HepG2 (cell line): ENCODE measurements at regions of chr17 and their contacts with region 1.

Region 1: GRCh38 chr17:42819944-42820535 is 4.0 kb downstream of the BECN1 start:
- DNase-seq: peak; percentile 88
- ATAC-seq: peak; percentile 67
- H3K4me3 ChIP-seq: no peak overlapping the region
- H3K27ac ChIP-seq: no peak overlapping the region
- H3K4me1 ChIP-seq: peaks cover 35% of the 10 kb centered on the region
- H3K27me3 ChIP-seq: peaks cover 0 to 7% of the 10 kb centered on the region in 2 experiments; a peak in 1 of 5 replicates
- CTCF ChIP-seq: peak; percentile 81
- EP300 ChIP-seq: no peak
- POLR2A ChIP-seq: no peak
- RAD21 ChIP-seq: peak; percentile 60

Region 2: DNA sequence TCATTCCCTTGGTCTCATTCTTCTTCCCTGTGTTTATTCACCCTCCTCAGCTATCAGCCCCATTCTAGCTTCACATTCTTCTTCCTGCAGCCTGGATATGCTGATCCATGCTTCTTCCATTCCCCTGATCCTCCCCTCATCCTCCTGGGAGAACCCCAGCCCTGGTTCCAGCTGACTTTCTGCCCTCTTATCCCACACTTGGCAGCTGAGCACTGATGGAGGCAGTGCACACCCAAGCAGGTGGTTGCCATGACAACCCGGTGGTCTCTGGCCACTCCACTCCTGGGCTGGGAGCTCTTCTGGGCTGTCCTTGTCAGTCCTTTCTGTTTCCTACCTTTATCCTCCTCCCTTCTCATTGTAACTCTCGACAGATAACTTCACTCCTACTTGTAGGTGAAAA is 177.7 kb before region 1 on chr17:
- CTCF ChIA-PET with region 1: no interaction called
- POLR2A ChIA-PET with region 1: no interaction called
- in situ Hi-C with region 1: no loop called
- intact Hi-C with region 1: no loop called
- DNase-seq: no peak
- ATAC-seq: peak; percentile 31; the same call in 1 of the 3 replicates
- H3K4me3 ChIP-seq: no peak overlapping the region
- H3K27ac ChIP-seq: no peak overlapping the region
- H3K4me1 ChIP-seq: peaks cover 9% of the 10 kb centered on the region; the same call in 1 of the 2 replicates
- H3K27me3 ChIP-seq: peaks cover 0 to 13% of the 10 kb centered on the region in 2 experiments; a peak in 2 of 5 replicates
- CTCF ChIP-seq: no peak
- EP300 ChIP-seq: no peak
- POLR2A ChIP-seq: no peak
- RAD21 ChIP-seq: no peak

Region 3: DNA sequence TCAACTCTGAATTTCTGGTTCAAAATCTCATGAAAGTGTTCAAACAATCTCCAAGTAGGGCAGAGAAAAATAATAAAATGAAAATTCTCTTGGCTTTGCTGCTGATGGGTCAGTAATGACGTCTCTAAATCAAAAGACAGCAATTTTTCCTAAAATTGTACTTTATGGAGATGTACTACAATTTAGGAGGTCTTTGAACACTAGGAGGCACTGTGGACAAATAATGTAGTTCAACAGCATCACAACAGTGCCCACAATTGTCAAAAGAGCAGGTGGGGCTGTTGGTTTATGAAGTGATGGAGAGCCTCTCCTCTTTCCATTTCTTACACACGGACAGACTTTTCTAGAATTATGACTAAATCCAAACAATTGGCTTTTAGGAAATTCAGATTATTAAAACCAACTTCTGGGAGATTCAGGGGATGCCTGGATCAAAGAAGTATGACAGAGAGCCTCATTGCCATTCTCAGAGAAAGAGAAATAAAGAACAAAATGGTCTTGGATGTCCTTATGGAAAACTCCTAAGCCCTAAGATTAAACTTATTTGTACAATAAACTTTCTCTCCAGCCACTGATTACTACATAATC is 99.0 kb before region 1 on chr17:
- CTCF ChIA-PET with region 1: interaction called, 7 read pairs
- POLR2A ChIA-PET with region 1: interaction called, 3 read pairs
- in situ Hi-C with region 1: loop called (anchors 10 kb)
- intact Hi-C with region 1: loop called (anchors 1 kb)
- DNase-seq: peak; percentile 83
- ATAC-seq: peak; percentile 90
- H3K4me3 ChIP-seq: no peak overlapping the region
- H3K27ac ChIP-seq: no peak overlapping the region
- H3K4me1 ChIP-seq: no peaks in the 10 kb centered on the region
- H3K27me3 ChIP-seq: no peaks in the 10 kb centered on the region
- CTCF ChIP-seq: peak; percentile 86
- EP300 ChIP-seq: no peak
- POLR2A ChIP-seq: no peak
- RAD21 ChIP-seq: peak; percentile 93

Region 4: DNA sequence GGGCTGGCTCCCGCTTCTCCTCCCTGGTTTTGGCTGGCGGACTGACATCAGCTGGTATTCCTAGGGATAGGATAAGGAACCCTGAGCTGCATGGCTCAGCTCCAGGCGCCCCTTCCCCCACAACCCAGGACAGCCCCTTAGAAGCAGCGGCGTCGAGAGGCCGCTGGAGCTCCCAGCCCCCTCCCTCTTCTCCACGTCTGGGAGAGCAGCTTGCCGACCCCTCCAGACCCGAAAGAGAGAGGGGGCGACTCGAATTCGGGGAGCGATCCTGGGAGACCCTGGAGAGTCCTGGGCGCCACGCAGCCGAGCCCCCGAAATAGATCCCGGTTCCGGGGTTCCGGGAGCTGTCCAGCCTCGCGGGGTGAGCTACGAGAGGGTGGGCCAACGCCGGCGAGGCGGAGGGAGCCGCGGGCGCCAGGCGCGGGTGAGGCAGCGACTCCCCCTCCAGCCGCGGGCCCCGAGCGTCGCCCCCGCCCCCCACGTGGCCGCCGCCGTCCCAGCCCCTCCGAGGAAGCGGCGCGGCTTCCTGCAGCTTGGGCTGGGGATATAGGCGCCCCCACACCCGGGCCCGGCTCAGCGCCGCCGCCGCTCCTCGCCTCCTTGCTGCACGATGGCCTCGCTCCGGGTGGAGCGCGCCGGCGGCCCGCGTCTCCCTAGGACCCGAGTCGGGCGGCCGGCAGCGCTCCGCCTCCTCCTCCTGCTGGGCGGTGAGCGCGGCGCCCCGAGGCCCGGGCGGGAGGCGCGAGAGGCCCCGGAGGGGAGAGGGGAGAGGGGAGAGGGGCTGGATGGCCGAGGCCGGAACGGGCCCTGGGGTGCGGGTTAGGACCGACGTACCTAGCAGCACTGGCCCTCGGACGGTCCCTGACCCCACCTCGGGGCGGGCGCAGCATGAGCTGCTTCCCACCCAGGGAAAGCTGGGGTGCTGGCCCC is 59.1 kb before region 1 on chr17 and contains the start of gene RAMP2:
- CTCF ChIA-PET with region 1: interaction called, 4 read pairs
- POLR2A ChIA-PET with region 1: interaction called, 17 read pairs
- in situ Hi-C with region 1: no loop called
- intact Hi-C with region 1: no loop called
- DNase-seq: no peak
- ATAC-seq: peak; percentile 58
- H3K4me3 ChIP-seq: peak within 1 kb of the TSS; percentile 53 to 75 (median 59)
- H3K27ac ChIP-seq: no peak within 1 kb of the TSS
- H3K4me1 ChIP-seq: peaks cover 53% of the 10 kb centered on the region
- H3K27me3 ChIP-seq: peaks cover 0 to 12% of the 10 kb centered on the region in 2 experiments; a peak in 2 of 5 replicates
- CTCF ChIP-seq: peak; percentile 1; the same call in 1 of the 2 replicates
- EP300 ChIP-seq: no peak
- POLR2A ChIP-seq: no peak
- RAD21 ChIP-seq: no peak
- total RNA-seq, gene RAMP2: 0.74 and 1.4 TPM in 2 replicates

Region 5: DNA sequence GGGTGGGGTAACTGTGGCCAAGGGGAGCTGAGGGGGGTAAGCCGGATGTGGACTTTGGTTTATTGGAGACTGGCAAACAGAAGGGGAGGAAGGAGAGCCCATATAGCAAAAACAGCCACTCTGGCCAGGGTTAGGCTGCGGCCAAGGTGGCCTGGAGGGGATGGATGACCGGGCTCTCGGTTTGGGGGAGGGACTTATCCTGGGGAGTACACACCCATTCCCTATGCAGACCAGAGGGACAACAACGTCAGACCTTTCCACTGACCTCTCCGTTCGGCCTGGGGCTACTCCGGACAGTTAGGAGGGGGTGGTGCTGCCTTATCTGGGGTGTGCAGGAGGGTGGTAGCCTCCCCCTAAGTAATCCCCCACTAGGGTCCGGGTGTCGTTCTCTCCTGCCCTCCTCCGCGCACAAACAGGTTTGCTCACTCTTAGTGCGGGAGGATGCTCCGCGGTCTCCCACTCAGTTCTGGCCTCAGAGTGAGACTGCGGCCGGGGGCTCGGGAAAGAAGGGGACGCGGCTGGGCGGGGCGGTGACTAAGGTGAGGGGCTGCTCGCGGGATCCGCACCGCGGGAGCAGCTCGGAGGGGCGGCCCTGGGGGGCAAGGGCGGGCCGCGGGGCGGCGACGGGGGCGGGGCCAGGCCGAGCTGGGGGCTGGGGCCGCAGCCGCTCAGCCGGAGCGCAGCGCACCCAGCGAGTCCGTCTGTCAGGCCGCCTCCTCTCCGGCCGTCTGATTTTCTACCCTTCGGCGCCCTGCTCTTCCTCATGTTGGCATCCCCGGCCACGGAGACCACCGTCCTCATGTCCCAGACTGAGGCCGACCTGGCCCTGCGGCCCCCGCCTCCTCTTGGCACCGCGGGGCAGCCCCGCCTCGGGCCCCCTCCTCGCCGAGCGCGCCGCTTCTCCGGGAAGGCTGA is 39.8 kb before region 1 on chr17 and contains the start of gene WNK4:
- CTCF ChIA-PET with region 1: interaction called, 4 read pairs
- POLR2A ChIA-PET with region 1: interaction called, 78 read pairs
- in situ Hi-C with region 1: no loop called
- intact Hi-C with region 1: no loop called
- DNase-seq: peak; percentile 98
- ATAC-seq: peak; percentile 88
- H3K4me3 ChIP-seq: peak within 1 kb of the TSS; percentile 87 to 99 (median 92)
- H3K27ac ChIP-seq: peak within 1 kb of the TSS; percentile 98
- H3K4me1 ChIP-seq: peaks cover 64% of the 10 kb centered on the region
- H3K27me3 ChIP-seq: no peaks in the 10 kb centered on the region; a peak in 1 of 5 replicates
- CTCF ChIP-seq: 0 out of 2 replicates have a peak, but pooled peaks have one; percentile 42
- EP300 ChIP-seq: peak in 1 of 2 experiments; percentile 92; a peak in 3 of 4 replicates
- POLR2A ChIP-seq: peak; percentile 90
- RAD21 ChIP-seq: peak; percentile 17
- total RNA-seq, gene WNK4: 1.5 and 2.7 TPM in 2 replicates

Region 6: GRCh38 chr17:42809250-42809649 is 10.8 kb before region 1 on chr17:
- CTCF ChIA-PET with region 1: no interaction called
- POLR2A ChIA-PET with region 1: interaction called, 29 read pairs
- in situ Hi-C with region 1: no loop called
- intact Hi-C with region 1: no loop called
- DNase-seq: no peak
- ATAC-seq: no peak
- H3K4me3 ChIP-seq: no peak overlapping the region
- H3K27ac ChIP-seq: no peak overlapping the region
- H3K4me1 ChIP-seq: peaks cover 18% of the 10 kb centered on the region
- H3K27me3 ChIP-seq: no peaks in the 10 kb centered on the region
- CTCF ChIP-seq: no peak
- EP300 ChIP-seq: no peak
- POLR2A ChIP-seq: no peak
- RAD21 ChIP-seq: no peak

Region 7: DNA sequence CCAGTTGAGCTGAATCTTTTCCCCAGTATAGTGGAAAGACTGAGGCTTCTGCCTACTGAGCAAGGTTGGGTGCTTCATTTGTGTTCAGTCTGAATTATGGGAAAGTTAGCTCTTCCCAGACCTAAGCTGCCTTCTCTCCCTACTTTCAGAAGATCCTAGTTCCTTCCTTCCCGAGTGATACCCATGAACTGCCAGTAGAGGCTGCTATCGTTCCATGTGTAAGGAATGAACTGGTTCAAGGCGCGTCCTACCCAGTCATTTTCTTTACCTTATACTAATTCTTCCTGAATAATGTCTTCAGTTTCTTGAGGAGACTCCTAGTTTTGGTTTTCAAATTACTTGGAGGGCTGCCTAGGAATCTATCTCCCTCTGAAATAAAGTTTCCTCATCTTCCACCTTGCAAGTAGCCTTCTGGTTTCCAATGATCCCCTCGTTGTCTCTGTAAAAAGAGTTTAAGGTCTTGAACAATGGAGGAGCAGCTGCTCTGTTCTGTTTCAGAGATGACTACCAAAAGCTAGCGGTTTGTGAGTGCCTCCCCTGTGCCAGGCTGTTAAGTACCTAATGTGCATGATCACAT is 23.4 kb after region 1 on chr17:
- CTCF ChIA-PET with region 1: no interaction called
- POLR2A ChIA-PET with region 1: interaction called, 12 read pairs
- in situ Hi-C with region 1: no loop called
- intact Hi-C with region 1: no loop called
- DNase-seq: peak; percentile 73
- ATAC-seq: peak; percentile 71
- H3K4me3 ChIP-seq: no peak overlapping the region
- H3K27ac ChIP-seq: no peak overlapping the region
- H3K4me1 ChIP-seq: peaks cover 11% of the 10 kb centered on the region; the same call in 1 of the 2 replicates
- H3K27me3 ChIP-seq: no peaks in the 10 kb centered on the region
- CTCF ChIP-seq: peak; percentile 97
- EP300 ChIP-seq: no peak
- POLR2A ChIP-seq: peak in 1 of 2 experiments; percentile 43; a peak in 1 of 4 replicates
- RAD21 ChIP-seq: peak; percentile 97

Region 8: GRCh38 chr17:42937712-42938596 is 117.9 kb after region 1 on chr17:
- CTCF ChIA-PET with region 1: interaction called, 10 read pairs
- POLR2A ChIA-PET with region 1: interaction called, 4 read pairs
- in situ Hi-C with region 1: no loop called
- intact Hi-C with region 1: loop called (anchors 1 kb)
- DNase-seq: peak; percentile 73
- ATAC-seq: peak; percentile 88
- H3K4me3 ChIP-seq: no peak overlapping the region
- H3K27ac ChIP-seq: no peak overlapping the region
- H3K4me1 ChIP-seq: peaks cover 46% of the 10 kb centered on the region
- H3K27me3 ChIP-seq: no peaks in the 10 kb centered on the region; a peak in 2 of 5 replicates
- CTCF ChIP-seq: peak; percentile 93
- EP300 ChIP-seq: no peak
- POLR2A ChIP-seq: no peak
- RAD21 ChIP-seq: peak; percentile 96